ENCODE measurements at regions of chr17 and their contacts with region 1.

Region 1: GRCh38 chr17:37490638-37491614 is 1.2 kb downstream of the DUSP14 start:
- H3K4me3 ChIP-seq: peak overlapping the region; percentile 74
- H3K27ac ChIP-seq: peak overlapping the region; percentile 65
- H3K4me1 ChIP-seq: peaks cover 22% of the 10 kb centered on the region
- CTCF ChIP-seq: no peak

Region 2: GRCh38 chr17:37406635-37407461 is 84.1 kb before region 1 on chr17 and contains the starts of genes ACACA and TADA2A:
- CTCF ChIA-PET with region 1: no interaction called
- POLR2A ChIA-PET with region 1: interaction called, 10 read pairs
- H3K4me3 ChIP-seq: peak within 1 kb of the TSS; percentile 88
- H3K27ac ChIP-seq: peak within 1 kb of the TSS; percentile 88
- H3K4me1 ChIP-seq: peaks cover 5% of the 10 kb centered on the region
- CTCF ChIP-seq: 0 out of 2 replicates have a peak, but pooled peaks have one; percentile 23

Region 3: GRCh38 chr17:37824534-37825485 is 333.9 kb after region 1 on chr17:
- CTCF ChIA-PET with region 1: no interaction called
- POLR2A ChIA-PET with region 1: no interaction called
- H3K4me3 ChIP-seq: no peak overlapping the region
- H3K27ac ChIP-seq: no peak overlapping the region
- H3K4me1 ChIP-seq: no peaks in the 10 kb centered on the region; the same call in 1 of the 2 replicates
- CTCF ChIP-seq: no peak

Measured in HEK293 (cell line).